Gastrocnemius medialis (tissue), 4 donors: ENCODE measurements at regions of chr14 and their contacts with region 1.

Region 1: GRCh38 chr14:85538636-85539035 is 8.7 kb downstream of the FLRT2 start:
- DNase-seq: peak; percentile 37 to 51
- ATAC-seq: peak; percentile 69 to 76
- H3K4me3 ChIP-seq: peak overlapping the region in 2 of 4 donors; percentile 13 to 24
- H3K27ac ChIP-seq: peak overlapping the region; percentile 83 to 91 (median 90)
- H3K4me1 ChIP-seq: peaks cover 28 to 32% of the 10 kb centered on the region in 2 donors
- H3K27me3 ChIP-seq: no peaks in the 10 kb centered on the region
- CTCF ChIP-seq: no peak
- POLR2A ChIP-seq: peak in 1 of 2 donors; percentile 53

Region 2: GRCh38 chr14:85572845-85573244 is 34.2 kb after region 1 on chr14:
- in situ Hi-C with region 1: no loop called
- intact Hi-C with region 1: loop called (anchors 2 kb)
- DNase-seq: no peak
- ATAC-seq: no peak
- H3K4me3 ChIP-seq: no peak overlapping the region
- H3K27ac ChIP-seq: peak overlapping the region; percentile 77 to 86 (median 82)
- H3K4me1 ChIP-seq: peaks cover 48 to 62% of the 10 kb centered on the region in 2 donors
- H3K27me3 ChIP-seq: no peaks in the 10 kb centered on the region
- CTCF ChIP-seq: no peak
- POLR2A ChIP-seq: no peak